IMR-90 (cell line): ENCODE measurements at regions of chr20 and their contacts with region 1.

Region 1: GRCh38 chr20:32116079-32116521 is 6.6 kb downstream of the TM9SF4 start:
- DNase-seq: peak; percentile 22
- ATAC-seq: peak; percentile 73
- H3K4me3 ChIP-seq: no peak overlapping the region
- H3K27ac ChIP-seq: no peak overlapping the region
- H3K4me1 ChIP-seq: peaks cover 2% of the 10 kb centered on the region; the same call in 1 of the 2 replicates
- H3K27me3 ChIP-seq: no peaks in the 10 kb centered on the region
- CTCF ChIP-seq: no peak
- POLR2A ChIP-seq: no peak
- RAD21 ChIP-seq: no peak

Region 2: GRCh38 chr20:31987744-31988143 is 128.4 kb before region 1 on chr20:
- CTCF ChIA-PET with region 1: no interaction called
- POLR2A ChIA-PET with region 1: no interaction called
- dilution Hi-C with region 1: no loop called
- in situ Hi-C with region 1: no loop called
- intact Hi-C with region 1: no loop called
- DNase-seq: no peak
- ATAC-seq: no peak
- H3K4me3 ChIP-seq: no peak overlapping the region
- H3K27ac ChIP-seq: no peak overlapping the region
- H3K4me1 ChIP-seq: no peaks in the 10 kb centered on the region
- H3K27me3 ChIP-seq: peaks cover 37% of the 10 kb centered on the region
- CTCF ChIP-seq: no peak
- POLR2A ChIP-seq: no peak
- RAD21 ChIP-seq: no peak

Region 3: GRCh38 chr20:32216179-32217142 is 100.4 kb after region 1 on chr20:
- CTCF ChIA-PET with region 1: no interaction called
- POLR2A ChIA-PET with region 1: no interaction called
- dilution Hi-C with region 1: no loop called
- in situ Hi-C with region 1: no loop called
- intact Hi-C with region 1: no loop called
- DNase-seq: no peak
- ATAC-seq: no peak
- H3K4me3 ChIP-seq: no peak overlapping the region
- H3K27ac ChIP-seq: no peak overlapping the region
- H3K4me1 ChIP-seq: no peaks in the 10 kb centered on the region
- H3K27me3 ChIP-seq: no peaks in the 10 kb centered on the region
- CTCF ChIP-seq: no peak
- POLR2A ChIP-seq: no peak
- RAD21 ChIP-seq: no peak

Region 4: GRCh38 chr20:33408716-33409654 is 1292.9 kb after region 1 on chr20:
- CTCF ChIA-PET with region 1: no interaction called
- POLR2A ChIA-PET with region 1: interaction called, 12 read pairs
- dilution Hi-C with region 1: no loop called
- in situ Hi-C with region 1: no loop called
- intact Hi-C with region 1: no loop called
- DNase-seq: no peak
- ATAC-seq: no peak
- H3K4me3 ChIP-seq: no peak overlapping the region
- H3K27ac ChIP-seq: no peak overlapping the region
- H3K4me1 ChIP-seq: peaks cover 7% of the 10 kb centered on the region
- H3K27me3 ChIP-seq: no peaks in the 10 kb centered on the region
- CTCF ChIP-seq: no peak
- POLR2A ChIP-seq: no peak
- RAD21 ChIP-seq: no peak